Left ventricle myocardium inferior (tissue), 1 donor: ENCODE measurements at regions of chr19 and their contacts with region 1.

Region 1: DNA sequence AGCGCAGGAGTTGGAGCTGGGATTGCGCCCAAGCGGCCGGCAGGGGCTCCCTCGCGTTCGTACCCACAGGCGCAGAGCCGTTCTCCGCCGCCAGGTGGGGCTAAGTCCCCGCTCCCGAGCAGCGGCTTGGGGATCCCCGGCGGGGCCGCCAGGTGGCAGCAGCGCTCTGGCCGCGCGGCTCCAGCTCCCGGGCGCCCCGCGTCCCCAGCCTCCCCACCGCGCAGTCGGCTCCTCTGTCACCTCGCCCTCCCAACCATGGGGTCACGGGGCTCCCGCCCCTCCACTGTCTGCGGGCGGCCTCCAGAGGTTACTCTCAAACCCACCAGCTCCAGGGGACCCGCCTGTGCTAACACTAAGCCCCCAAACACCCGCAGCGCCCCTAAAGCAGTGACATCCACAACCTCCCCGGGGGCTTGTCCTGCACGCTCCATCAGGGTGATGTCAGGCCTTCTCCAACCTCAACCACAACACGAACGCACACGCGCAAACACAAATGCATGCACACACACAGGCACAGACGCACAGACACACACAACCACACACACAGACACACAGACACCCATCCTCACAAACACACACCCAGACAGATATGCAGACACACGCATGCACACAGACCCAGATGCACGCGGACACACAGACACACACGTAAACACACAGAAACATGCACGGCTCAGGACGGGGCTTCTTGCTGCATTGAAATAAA is 18.4 kb upstream of the KCTD15 start:
- DNase-seq: peak; percentile 83
- H3K4me3 ChIP-seq: peak overlapping the region; percentile 52
- H3K27ac ChIP-seq: no peak overlapping the region
- H3K4me1 ChIP-seq: peaks cover 16% of the 10 kb centered on the region
- H3K27me3 ChIP-seq: peaks cover 93% of the 10 kb centered on the region
- CTCF ChIP-seq: peak; percentile 100

Region 2: GRCh38 chr19:33720691-33721682 is 57.3 kb before region 1 on chr19:
- intact Hi-C with region 1: no loop called
- DNase-seq: no peak
- H3K4me3 ChIP-seq: no peak overlapping the region
- H3K27ac ChIP-seq: no peak overlapping the region
- H3K4me1 ChIP-seq: no peaks in the 10 kb centered on the region
- H3K27me3 ChIP-seq: peaks cover 51% of the 10 kb centered on the region
- CTCF ChIP-seq: no peak

Region 3: GRCh38 chr19:33998739-33999345 is 220.6 kb after region 1 on chr19:
- intact Hi-C with region 1: loop called (anchors 5 kb)
- DNase-seq: no peak
- H3K4me3 ChIP-seq: no peak overlapping the region
- H3K27ac ChIP-seq: no peak overlapping the region
- H3K4me1 ChIP-seq: no peaks in the 10 kb centered on the region
- H3K27me3 ChIP-seq: peaks cover 21% of the 10 kb centered on the region
- CTCF ChIP-seq: peak; percentile 65

Region 4: DNA sequence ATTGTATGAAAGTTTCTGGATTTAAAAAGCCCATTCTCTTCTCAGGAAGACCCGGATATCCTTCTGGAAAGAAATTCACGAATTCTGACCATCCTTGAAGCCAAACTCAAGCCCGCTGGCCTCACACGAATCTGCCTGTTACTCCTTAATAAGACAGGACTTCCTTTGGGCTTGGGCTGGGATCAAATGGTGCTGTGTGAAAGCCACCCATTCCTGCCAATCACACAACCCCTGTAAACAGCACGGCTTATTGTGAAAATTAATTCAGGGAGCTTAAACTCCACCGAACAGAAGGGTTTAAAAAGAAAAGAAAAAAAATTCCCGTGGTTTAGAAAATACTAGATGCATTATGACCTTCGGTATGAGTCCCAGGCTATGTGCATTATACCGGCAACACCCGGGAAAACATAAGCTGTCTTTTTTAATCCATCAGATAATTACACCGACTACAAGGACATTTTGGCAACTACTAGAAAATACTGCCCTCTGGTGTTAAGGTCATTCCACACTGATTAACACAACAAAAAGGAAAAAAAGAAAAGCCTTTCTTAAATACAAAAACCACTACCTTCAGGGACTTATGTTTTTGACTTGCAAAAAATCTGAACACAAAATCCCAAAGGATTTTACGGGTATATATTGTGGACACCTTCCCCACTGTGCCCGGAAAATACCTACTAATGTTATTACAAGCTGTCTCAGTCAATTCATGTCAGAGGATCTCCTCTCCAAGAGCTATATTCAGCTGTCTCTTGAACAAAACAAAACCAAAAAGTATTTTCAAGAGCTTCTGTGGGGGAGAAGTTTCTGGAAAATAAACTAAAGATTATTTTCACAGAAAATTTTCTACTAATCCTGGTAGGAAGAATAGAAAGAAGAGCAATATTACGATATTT is 318.0 kb after region 1 on chr19:
- intact Hi-C with region 1: loop called (anchors 5 kb)
- DNase-seq: no peak
- H3K4me3 ChIP-seq: no peak overlapping the region
- H3K27ac ChIP-seq: no peak overlapping the region
- H3K4me1 ChIP-seq: no peaks in the 10 kb centered on the region
- H3K27me3 ChIP-seq: peaks cover 53% of the 10 kb centered on the region
- CTCF ChIP-seq: peak; percentile 72